ENCODE measurements at regions of chr10 and their contacts with region 1.

Region 1: DNA sequence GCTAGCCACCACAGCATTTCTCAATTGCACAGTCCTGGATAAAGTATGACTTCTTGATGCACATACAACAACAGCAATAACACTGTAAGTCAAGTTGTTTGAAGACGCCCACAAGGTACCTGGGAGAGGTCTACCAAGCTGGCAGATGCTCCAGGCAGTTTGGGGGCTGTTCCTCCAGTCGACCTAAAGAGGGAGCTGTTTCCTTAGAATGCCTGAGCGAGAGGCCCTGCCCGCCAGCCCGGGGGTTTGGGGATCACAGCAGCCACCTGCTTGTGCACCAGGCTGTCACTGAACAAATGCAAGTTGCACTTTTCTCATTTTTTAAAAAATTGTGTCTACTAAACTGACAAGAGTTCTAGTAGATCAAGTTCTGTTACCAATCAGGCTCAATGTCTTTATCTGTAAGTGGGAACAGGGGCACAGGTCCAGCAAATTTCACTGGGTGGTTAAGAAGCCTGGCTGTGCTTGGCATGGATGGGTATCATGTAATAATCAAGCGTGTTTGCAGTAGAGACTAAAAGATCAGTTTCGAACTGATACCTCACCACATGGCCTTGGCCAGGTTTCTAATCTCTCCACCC is 193.8 kb upstream of the ADO start:
- DNase-seq: peak; percentile 32
- H3K4me3 ChIP-seq: no peak overlapping the region
- H3K27ac ChIP-seq: no peak overlapping the region
- H3K27me3 ChIP-seq: no peaks in the 10 kb centered on the region
- CTCF ChIP-seq: peak; percentile 94

Region 2: DNA sequence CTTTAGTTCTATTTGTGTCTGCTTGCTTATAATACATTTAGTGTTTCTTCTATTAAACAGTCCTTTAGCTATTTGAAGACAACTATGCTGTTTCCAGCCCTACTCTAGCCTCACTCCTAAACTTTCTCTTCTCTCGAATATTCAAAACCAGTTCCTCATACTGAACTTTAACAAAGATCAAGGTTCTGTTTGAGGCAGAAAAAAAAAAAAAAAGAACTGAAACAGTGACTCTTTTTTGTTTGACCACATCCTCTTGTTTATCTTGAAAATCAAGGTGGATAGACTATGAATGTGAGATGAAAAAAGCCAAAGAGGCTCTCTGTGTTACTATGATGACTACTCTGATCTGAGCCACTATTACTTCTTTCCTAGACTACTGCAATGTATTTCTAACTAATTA is 82.3 kb before region 1 on chr10:
- in situ Hi-C with region 1: no loop called
- DNase-seq: no peak
- H3K4me3 ChIP-seq: no peak overlapping the region
- H3K27ac ChIP-seq: no peak overlapping the region
- H3K27me3 ChIP-seq: no peaks in the 10 kb centered on the region
- CTCF ChIP-seq: no peak

Region 3: DNA sequence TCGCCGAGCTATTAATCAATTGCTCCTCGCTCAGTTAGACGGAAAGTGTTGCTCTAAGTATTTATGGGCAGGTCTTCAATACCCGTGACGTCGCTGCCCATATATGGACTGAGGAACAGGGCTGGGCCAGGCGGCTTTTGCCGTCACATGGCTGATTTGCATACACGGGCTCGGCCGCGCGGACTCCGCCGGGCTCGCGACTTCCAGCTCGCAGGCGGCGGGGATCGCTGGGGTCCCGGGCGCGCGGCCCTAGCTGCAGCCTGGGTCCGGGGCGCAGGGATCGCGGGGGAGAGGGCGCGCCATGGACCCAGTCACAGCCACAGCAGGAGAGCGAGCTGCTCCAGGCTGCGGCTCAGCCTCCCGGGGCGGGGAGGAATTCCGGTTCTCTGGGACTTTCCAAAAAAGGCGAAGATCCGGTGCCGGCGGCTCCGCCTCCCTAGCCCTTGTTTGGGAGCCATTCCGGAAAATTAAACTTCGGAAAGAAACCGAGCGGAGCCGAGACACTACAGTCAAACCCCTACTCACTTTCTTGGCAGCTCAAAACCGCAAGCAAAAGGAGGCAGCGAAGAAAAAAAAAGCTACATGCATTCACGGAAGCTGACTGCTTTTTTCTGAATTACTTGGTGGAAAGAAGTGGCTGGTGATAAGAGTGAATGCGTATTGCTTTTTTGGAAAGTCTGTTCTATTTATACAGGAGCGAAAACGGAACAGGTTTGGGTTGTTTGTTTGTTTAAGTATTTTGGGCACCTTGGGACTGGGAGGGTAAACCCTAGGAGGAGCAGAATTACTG is 205.8 kb after region 1 on chr10 and contains the start of gene EGR2:
- in situ Hi-C with region 1: loop called (anchors 25 kb)
- DNase-seq: peak; percentile 95
- H3K4me3 ChIP-seq: peak within 1 kb of the TSS; percentile 62
- H3K27ac ChIP-seq: peak within 1 kb of the TSS; percentile 81
- H3K27me3 ChIP-seq: peaks cover 32% of the 10 kb centered on the region
- CTCF ChIP-seq: no peak

Measured in brain microvascular endothelial cell (primary cell).